ENCODE measurements at regions of chr19 and their contacts with region 1.

Region 1: GRCh38 chr19:49565261-49565660 is 15.1 kb downstream of the NOSIP start:
- DNase-seq: peak in 4 of 14 experiments; percentile 36 to 72 (median 66)
- ATAC-seq: no peak
- H3K4me3 ChIP-seq: no peak overlapping the region
- H3K4me3 Mint-ChIP-seq: peak overlapping the region; percentile 86
- H3K27ac ChIP-seq: peak overlapping the region; percentile 73 to 77
- H3K27ac Mint-ChIP-seq: peak overlapping the region; percentile 89
- H3K4me1 ChIP-seq: peaks cover 99% of the 10 kb centered on the region
- H3K4me1 Mint-ChIP-seq: peaks cover 81% of the 10 kb centered on the region
- H3K27me3 ChIP-seq: no peaks in the 10 kb centered on the region
- H3K27me3 Mint-ChIP-seq: no peaks in the 10 kb centered on the region
- CTCF ChIP-seq: no peak

Region 2: DNA sequence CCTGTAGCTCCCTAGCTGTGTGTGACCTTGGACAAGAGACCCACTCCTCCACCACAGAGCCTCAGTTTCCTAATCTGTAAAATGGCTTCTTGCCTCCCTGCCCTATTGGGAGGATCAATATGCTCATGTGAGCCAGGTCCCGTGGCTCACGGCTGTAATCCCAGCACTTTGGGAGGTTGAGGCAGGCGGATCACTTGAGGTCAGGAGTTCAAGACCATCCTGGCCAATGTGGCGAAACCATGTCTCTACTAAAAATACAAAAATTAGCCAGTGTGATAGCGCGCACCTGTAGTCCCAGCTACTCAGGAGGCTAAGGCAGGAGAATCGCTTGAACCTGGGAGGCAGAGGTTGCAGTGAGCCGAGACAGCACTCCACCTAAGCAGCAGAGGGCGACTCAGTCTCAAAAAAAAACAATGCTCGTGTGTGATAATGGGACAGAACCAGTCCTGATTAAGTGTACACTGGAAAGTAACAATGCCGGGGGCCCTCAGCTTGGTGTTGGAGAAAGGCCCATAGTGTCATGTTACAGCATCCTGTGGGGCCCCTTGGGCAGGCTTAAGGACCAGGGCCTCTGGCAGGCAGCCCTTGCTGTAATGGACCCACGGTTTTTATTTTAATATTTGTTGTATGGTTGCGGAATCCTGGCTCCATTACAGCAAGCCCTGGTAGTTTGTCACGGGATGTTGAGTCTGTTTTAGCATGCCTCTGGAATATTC is 62.2 kb before region 1 on chr19:
- CTCF ChIA-PET with region 1: interaction called, 14 read pairs
- POLR2A ChIA-PET with region 1: interaction called, 4 read pairs
- intact Hi-C with region 1: loop called (anchors 1 kb)
- DNase-seq: peak in 9 of 14 experiments; percentile 39 to 86 (median 56)
- ATAC-seq: no peak
- H3K4me3 ChIP-seq: no peak overlapping the region
- H3K4me3 Mint-ChIP-seq: peak overlapping the region; percentile 81
- H3K27ac ChIP-seq: peak overlapping the region in 1 of 2 donors; percentile 9
- H3K27ac Mint-ChIP-seq: peak overlapping the region; percentile 98
- H3K4me1 ChIP-seq: peaks cover 56% of the 10 kb centered on the region
- H3K4me1 Mint-ChIP-seq: peaks cover 60% of the 10 kb centered on the region
- H3K27me3 ChIP-seq: no peaks in the 10 kb centered on the region
- H3K27me3 Mint-ChIP-seq: no peaks in the 10 kb centered on the region
- CTCF ChIP-seq: peak; percentile 69